WTC11 (cell line): ENCODE measurements at regions of chr7 and their contacts with region 1.

Region 1: DNA sequence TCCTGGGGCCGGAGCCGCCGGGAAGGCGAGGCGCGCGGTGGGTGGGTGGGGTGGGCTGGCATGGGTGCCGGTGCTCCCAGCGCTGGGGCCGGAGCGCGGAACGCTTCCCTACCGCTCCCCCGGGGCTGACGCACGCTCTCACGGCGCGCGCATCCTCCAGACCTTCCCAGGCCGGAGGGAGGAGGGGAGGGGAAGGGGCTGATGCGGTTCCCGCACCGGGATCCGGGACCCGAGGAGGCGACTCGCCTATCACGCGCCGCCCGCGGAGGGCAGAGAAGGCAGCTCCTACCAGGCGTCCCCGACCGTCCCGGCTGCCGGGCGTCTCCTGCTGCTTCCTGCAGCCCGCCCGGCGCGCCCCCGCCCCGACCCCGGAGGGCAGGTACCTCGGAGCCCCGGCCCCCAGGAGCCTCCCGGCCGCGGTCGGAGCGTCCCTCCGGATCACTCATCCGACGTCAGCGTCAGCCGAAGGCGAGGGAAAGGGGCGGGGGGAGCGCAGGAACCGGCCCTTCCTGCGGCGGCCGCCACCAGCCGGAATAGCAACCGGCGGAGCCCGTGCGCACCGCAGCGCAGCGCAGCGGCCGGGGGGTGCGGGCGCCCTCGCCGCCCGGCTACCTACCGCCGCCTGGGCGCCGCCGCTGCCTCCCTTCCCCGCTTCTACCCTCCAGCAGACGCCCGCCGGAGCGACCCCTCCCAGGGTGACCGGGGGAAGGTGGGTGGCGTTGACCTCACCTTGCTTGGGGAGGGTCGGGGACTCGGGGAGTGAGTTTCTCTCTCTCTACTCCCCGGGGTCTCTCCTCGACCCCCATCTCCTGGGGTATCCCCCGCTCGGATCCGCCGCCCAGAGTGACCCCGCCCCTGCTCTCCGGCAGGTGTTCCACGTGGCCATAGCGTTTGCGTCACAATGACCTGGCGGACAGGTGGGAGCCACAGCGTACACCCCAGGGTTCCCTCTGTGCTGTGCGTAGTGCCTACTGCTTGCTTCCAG is at the start of gene ICA1:
- DNase-seq: peak; percentile 82
- ATAC-seq: peak; percentile 86
- H3K4me3 Mint-ChIP-seq: peak within 1 kb of the TSS; percentile 74
- H3K27ac Mint-ChIP-seq: peak within 1 kb of the TSS; percentile 43; the same call in 1 of the 2 replicates
- H3K4me1 Mint-ChIP-seq: peaks cover 34% of the 10 kb centered on the region
- H3K27me3 Mint-ChIP-seq: peaks cover 5% of the 10 kb centered on the region; the same call in 1 of the 2 replicates
- CTCF ChIP-seq: no peak
- total RNA-seq, gene ICA1: 31.2 to 36.8 TPM (median 33.4 TPM) in 3 replicates

Region 2: GRCh38 chr7:8249121-8249520 is 12.9 kb before region 1 on chr7:
- CTCF ChIA-PET with region 1: no interaction called
- POLR2A ChIA-PET with region 1: interaction called, 10 read pairs
- DNase-seq: no peak
- ATAC-seq: no peak
- H3K4me3 Mint-ChIP-seq: no peak overlapping the region
- H3K27ac Mint-ChIP-seq: no peak overlapping the region; the same call in 1 of the 2 replicates
- H3K4me1 Mint-ChIP-seq: peaks cover 2% of the 10 kb centered on the region
- H3K27me3 Mint-ChIP-seq: no peaks in the 10 kb centered on the region
- CTCF ChIP-seq: no peak